GM12878 (cell line): ENCODE measurements at regions of chr9 and their contacts with region 1.

Region 1: DNA sequence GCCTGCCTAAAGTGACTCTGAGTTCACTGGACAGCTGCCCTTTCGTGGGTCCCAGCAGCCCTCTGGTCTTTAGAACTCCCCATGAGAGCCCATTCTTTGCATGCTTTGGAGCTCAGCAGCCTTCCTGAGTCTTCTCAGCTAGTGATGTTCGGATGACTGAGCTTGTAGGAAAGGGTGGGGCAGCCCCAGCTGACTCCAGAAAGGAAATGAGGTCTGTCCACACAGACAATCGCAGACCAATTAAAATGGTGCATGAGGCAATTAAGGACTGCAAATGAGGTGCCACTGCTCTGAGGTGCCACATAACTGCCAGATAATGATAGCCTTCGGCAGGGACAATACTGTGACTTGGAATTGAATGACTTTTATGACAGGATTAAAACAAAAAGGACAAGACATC is 25.4 kb upstream of the TOMM5 start:
- DNase-seq: no peak
- ATAC-seq: no peak
- H3K4me3 ChIP-seq: no peak overlapping the region
- H3K27ac ChIP-seq: no peak overlapping the region
- H3K4me1 ChIP-seq: no peaks in the 10 kb centered on the region
- H3K27me3 ChIP-seq: peaks cover 0 to 6% of the 10 kb centered on the region in 2 experiments; a peak in 2 of 4 replicates
- CTCF ChIP-seq: no peak
- EP300 ChIP-seq: no peak
- POLR2A ChIP-seq: no peak
- RAD21 ChIP-seq: no peak

Region 2: DNA sequence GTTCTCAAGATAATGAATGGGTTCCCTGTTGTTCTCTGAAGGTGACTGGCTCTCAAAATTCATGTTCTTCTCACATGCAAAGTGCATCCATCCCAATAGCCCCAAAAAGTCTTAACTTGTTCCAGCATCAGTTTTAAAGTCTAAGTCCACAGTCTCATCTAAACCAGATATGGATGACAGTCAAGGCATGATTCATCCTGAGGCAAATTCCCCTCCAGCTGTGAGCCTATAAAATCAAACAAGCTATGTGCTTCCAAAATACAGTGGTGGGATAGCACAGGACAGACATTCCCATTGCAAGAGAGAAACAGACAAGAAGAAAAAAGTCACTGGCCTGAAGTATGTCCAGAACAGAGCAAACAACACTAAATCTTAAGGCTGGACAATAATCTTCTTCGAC is 67.1 kb before region 1 on chr9:
- CTCF ChIA-PET with region 1: no interaction called
- POLR2A ChIA-PET with region 1: no interaction called
- RAD21 ChIA-PET with region 1: no interaction called
- SMC1A ChIA-PET with region 1: no interaction called
- in situ Hi-C with region 1: no loop called
- intact Hi-C with region 1: loop called (anchors 10 kb)
- DNase-seq: no peak
- ATAC-seq: no peak
- H3K4me3 ChIP-seq: no peak overlapping the region
- H3K27ac ChIP-seq: no peak overlapping the region
- H3K4me1 ChIP-seq: no peaks in the 10 kb centered on the region
- H3K27me3 ChIP-seq: no peaks in the 10 kb centered on the region
- CTCF ChIP-seq: no peak
- EP300 ChIP-seq: no peak
- POLR2A ChIP-seq: no peak
- RAD21 ChIP-seq: no peak